ENCODE measurements at regions of chr1 and their contacts with region 1.

Region 1: GRCh38 chr1:8702850-8703810 is 114.3 kb downstream of the RERE start:
- DNase-seq: peak; percentile 19 to 73 (median 43)
- ATAC-seq: no peak
- H3K4me3 ChIP-seq: peak overlapping the region; percentile 18 to 21
- H3K4me3 Mint-ChIP-seq: peak overlapping the region; percentile 86
- H3K27ac ChIP-seq: no peak overlapping the region
- H3K27ac Mint-ChIP-seq: no peak overlapping the region
- H3K4me1 ChIP-seq: peaks cover 32% of the 10 kb centered on the region
- H3K4me1 Mint-ChIP-seq: peaks cover 29% of the 10 kb centered on the region
- H3K27me3 ChIP-seq: peaks cover 6 to 20% of the 10 kb centered on the region in 2 experiments
- H3K27me3 Mint-ChIP-seq: peaks cover 52% of the 10 kb centered on the region
- CTCF ChIP-seq: no peak

Region 2: GRCh38 chr1:8525558-8526275 is 177.4 kb before region 1 on chr1:
- CTCF ChIA-PET with region 1: no interaction called
- POLR2A ChIA-PET with region 1: interaction called, 13 read pairs
- intact Hi-C with region 1: no loop called
- DNase-seq: peak; percentile 35 to 92 (median 60)
- ATAC-seq: peak; percentile 93
- H3K4me3 ChIP-seq: peak overlapping the region; percentile 44 to 71
- H3K4me3 Mint-ChIP-seq: no peak overlapping the region
- H3K27ac ChIP-seq: peak overlapping the region; percentile 71 to 92
- H3K27ac Mint-ChIP-seq: no peak overlapping the region
- H3K4me1 ChIP-seq: peaks cover 44% of the 10 kb centered on the region
- H3K4me1 Mint-ChIP-seq: peaks cover 43% of the 10 kb centered on the region
- H3K27me3 ChIP-seq: no peaks in the 10 kb centered on the region
- H3K27me3 Mint-ChIP-seq: no peaks in the 10 kb centered on the region
- CTCF ChIP-seq: no peak

Region 3: DNA sequence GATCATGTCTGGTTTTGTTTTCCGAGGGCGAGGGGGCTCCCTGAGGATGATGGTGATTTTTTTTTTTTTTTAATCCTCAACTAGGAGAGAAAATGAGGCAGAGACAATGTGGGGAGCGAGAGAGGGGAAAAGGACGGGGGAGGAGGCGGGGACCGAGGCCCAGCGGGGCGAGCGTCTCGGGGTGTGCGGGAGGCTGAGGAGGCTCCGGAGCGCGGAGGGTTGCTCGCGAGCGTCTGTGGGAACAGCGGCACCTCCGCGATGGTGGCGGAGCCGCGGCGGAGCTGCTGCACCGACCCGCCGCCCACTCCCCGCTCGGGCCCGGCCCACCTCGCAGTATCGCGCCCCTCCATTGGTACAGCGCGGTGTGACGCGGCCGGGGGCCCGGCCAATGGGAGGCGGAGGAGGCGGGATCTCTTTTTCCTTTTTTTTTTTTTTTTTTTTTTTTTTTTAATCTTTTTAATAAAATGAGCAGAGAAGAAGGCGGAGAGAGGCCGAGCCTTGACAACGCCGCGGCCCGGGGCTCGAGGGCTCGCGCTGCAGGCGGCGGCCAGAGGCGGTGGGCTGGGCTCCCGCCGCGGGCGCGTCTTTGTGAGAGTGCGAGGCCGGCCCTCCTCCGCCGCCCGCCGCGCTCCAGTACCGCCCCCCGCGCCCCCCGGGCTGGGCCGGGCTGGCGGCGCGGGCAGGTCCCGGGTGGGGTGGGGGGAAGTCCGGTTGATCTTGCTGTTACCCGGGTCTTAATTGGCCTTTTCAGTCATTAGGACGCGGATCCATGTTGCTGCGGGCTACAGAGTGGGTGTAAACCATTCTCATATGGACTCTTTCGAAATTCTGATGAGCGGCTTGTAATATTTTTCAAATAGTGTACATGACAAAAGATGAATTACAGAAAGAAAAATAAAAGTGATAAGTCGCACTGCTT is 114.5 kb after region 1 on chr1 and contains the start of gene RERE:
- CTCF ChIA-PET with region 1: no interaction called
- POLR2A ChIA-PET with region 1: no interaction called
- intact Hi-C with region 1: loop called (anchors 5 kb)
- DNase-seq: peak; percentile 91 to 99 (median 97)
- ATAC-seq: peak; percentile 96
- H3K4me3 ChIP-seq: peak within 1 kb of the TSS; percentile 84 to 98
- H3K4me3 Mint-ChIP-seq: peak within 1 kb of the TSS; percentile 92
- H3K27ac ChIP-seq: peak within 1 kb of the TSS; percentile 85 to 90
- H3K27ac Mint-ChIP-seq: peak within 1 kb of the TSS; percentile 90
- H3K4me1 ChIP-seq: peaks cover 24% of the 10 kb centered on the region
- H3K4me1 Mint-ChIP-seq: peaks cover 41% of the 10 kb centered on the region
- H3K27me3 ChIP-seq: no peaks in the 10 kb centered on the region
- H3K27me3 Mint-ChIP-seq: no peaks in the 10 kb centered on the region
- CTCF ChIP-seq: no peak
- total RNA-seq, gene RERE: 62.8 to 68.4 TPM

Measured in CD8-positive, alpha-beta T cell (primary cell).